Colonic mucosa (tissue), 4 donors: ENCODE measurements at regions of chr2 and their contacts with region 1.

Region 1: GRCh38 chr2:235746257-235747084 is 252.6 kb downstream of the AGAP1 start:
- DNase-seq: peak; percentile 72
- H3K4me3 ChIP-seq: no peak overlapping the region
- H3K27ac ChIP-seq: no peak overlapping the region
- H3K4me1 ChIP-seq: no peaks in the 10 kb centered on the region
- H3K27me3 ChIP-seq: no peaks in the 10 kb centered on the region
- CTCF ChIP-seq: peak; percentile 69

Region 2: DNA sequence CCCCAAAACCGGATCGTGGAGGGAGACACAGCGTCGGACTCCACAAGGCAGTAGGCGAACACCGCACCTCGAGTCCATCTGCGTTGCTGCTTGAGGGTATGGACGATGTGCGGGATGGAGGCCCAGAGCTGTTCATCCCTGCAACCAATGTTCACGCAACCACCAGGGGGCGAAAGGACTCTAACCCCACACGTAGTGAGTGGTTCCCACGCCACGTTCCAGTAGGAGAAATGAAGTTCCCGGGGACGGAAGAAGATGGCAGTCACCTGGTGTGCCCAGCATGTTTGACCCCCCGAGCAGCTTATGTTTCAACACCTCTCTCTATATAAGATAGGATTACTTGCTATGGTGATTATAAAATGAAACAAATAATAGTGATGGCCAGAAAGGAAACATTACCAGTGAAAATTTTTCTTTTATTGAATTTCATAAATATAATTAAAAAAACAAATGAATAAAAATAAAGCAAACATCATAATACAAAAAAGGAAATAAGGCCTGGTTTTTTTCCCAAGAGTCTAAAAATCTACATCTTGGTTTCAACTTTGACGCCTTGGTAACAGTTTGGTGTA is 610.4 kb before region 1 on chr2:
- intact Hi-C with region 1: loop called (anchors 5 kb)
- DNase-seq: peak; percentile 90
- H3K4me3 ChIP-seq: no peak overlapping the region
- H3K27ac ChIP-seq: no peak overlapping the region
- H3K4me1 ChIP-seq: no peaks in the 10 kb centered on the region
- H3K27me3 ChIP-seq: no peaks in the 10 kb centered on the region
- CTCF ChIP-seq: peak; percentile 75

Region 3: GRCh38 chr2:235588750-235589149 is 157.7 kb before region 1 on chr2:
- intact Hi-C with region 1: no loop called
- DNase-seq: no peak
- H3K4me3 ChIP-seq: no peak overlapping the region
- H3K27ac ChIP-seq: no peak overlapping the region
- H3K4me1 ChIP-seq: no peaks in the 10 kb centered on the region
- H3K27me3 ChIP-seq: no peaks in the 10 kb centered on the region
- CTCF ChIP-seq: no peak

Region 4: DNA sequence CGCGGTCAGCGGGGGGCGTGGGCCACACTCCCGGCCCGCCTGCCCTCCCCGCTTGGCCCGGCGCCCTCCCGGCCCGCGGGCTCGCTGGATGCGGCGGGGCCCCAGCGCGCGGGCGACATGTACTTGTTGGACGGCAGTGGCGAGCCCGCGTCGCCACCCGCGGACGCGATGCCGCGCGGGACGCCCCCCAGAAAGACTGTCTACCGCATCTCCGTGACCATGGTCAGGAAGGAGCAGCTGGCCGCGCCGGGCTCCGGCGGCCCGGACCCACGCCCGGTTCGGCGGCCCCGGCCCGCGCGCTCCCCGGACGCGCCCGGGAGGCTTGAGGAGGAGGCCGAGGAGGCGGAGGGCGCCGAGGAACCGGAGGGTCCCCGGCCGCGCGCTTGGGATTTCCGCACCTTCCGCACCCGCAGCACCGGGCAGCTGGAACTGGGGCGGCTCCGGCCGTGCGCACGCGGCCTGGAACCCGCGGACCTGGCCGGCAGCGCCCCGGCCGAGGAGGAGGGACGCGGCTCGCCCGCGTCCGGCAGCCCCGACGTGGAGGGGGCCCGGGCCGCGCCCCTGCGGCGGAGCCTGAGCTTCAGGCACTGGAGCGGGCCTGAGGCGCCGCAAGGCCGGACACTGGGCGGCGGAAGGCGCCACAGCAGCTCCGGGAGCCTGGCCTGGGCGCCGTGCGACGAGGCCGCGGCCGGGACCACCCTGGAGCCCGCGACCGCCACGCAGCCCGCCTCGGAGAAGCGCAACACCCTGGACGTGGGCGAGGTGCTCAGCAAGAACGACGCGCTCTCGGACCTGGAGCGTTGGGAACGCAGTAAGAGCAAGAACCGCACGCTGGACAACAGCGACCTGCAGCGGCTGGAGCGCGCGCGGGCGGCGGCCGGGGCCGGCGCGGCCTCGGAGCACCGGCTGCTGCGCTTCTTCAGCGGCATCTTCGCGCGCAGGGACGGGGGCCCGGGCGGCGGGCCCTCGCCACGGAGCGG is 76.2 kb before region 1 on chr2:
- intact Hi-C with region 1: loop called (anchors 5 kb)
- DNase-seq: peak; percentile 59
- H3K4me3 ChIP-seq: peak overlapping the region; percentile 41
- H3K27ac ChIP-seq: no peak overlapping the region
- H3K4me1 ChIP-seq: no peaks in the 10 kb centered on the region
- H3K27me3 ChIP-seq: no peaks in the 10 kb centered on the region
- CTCF ChIP-seq: peak; percentile 31

Region 5: DNA sequence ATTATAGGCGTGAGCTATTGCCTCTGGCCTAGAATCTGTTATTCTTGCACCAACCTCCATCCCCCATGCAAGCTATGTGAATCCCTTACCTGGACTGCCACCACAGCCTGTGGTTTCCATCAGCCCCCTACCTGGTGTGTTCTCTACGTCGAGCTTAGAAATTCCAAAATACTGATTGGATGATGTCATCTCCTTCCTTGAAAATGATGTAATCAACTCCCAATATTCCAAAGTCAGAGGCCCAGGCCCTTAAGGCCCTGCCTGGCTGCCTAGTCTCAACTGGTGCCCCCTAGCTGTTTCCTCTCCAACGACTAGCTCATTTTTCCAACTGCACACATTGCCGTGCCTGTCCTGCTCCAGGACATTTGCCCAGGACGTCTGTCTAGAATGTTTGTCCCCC is 463.1 kb after region 1 on chr2:
- intact Hi-C with region 1: no loop called
- DNase-seq: no peak
- H3K4me3 ChIP-seq: no peak overlapping the region
- H3K27ac ChIP-seq: no peak overlapping the region
- H3K4me1 ChIP-seq: no peaks in the 10 kb centered on the region
- H3K27me3 ChIP-seq: peaks cover 4% of the 10 kb centered on the region
- CTCF ChIP-seq: no peak